Tibial artery (tissue), 4 donors: ENCODE measurements at regions of chr21 and their contacts with region 1.

Region 1: DNA sequence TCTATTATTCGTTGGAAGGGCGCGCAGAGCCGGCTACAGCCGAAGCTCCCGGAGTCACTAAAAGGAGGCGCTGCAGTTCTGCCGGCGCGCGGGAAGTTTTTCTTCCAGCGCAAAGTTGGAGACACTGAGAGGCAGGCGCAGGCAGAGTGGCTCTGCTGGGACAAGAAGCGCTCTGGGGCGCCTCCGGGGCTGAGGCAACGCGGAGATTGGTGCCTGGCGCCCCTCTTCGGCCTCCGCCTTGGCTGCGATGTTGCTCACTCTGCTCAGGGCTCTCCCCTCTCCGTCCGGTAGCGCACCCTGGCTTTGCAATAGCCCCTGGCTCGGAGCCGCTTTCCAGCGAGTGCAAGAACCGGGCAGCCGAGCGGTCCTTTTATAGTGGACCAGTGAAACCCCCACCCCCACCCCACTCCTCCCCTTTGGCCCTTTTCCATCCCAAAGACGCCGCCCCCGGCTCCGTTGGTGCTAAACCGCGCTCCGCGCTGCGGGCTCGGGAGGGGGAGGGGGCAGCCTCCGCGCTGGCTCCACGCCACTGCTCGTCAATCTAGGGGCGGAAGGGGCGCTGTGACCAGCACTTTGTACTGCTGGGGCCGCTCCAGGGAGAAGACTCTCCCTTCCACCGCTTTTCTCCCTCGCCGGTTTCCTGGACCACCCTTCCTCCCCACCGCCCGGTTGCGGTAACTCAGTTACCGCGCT is at the start of gene ADAMTS1:
- DNase-seq: peak; percentile 93 to 97
- H3K4me3 ChIP-seq: peak within 1 kb of the TSS; percentile 79 to 82
- H3K27ac ChIP-seq: peak within 1 kb of the TSS; percentile 89 to 95
- H3K4me1 ChIP-seq: peaks cover 0 to 34% (median 7%) of the 10 kb centered on the region in 4 donors
- H3K27me3 ChIP-seq: no peaks in the 10 kb centered on the region
- CTCF ChIP-seq: no peak

Region 2: GRCh38 chr21:25682382-25682781 is 1162.8 kb before region 1 on chr21:
- intact Hi-C with region 1: no loop called
- DNase-seq: no peak
- H3K4me3 ChIP-seq: no peak overlapping the region
- H3K27ac ChIP-seq: no peak overlapping the region
- H3K4me1 ChIP-seq: peaks cover 0 to 5% (median 0%) of the 10 kb centered on the region in 4 donors
- H3K27me3 ChIP-seq: no peaks in the 10 kb centered on the region
- CTCF ChIP-seq: no peak

Region 3: DNA sequence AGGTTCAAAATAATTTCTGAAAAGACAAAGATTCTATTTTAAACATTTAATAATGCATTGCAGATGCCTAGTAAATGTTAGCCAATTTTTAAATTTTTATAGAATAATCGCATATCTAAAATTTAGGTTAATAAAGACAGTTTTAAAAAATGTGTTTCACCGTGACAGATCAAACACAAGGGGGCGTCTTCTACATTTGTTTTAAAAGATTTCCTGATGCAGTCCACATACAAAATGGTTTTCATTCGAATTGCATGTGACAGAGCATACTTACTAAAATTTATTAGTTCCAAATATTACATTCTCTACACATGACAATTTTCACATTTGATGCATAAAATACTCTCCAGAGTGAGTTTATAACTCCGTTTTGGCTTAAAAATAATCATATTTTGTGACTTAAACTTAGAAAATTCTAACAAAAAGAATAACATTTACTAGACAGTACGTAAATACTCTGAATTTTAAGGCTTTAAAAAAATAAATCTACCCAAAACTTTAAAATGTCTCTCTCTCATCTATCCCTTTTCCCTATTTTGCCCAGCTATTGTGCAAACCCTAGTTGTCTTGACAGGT is 75.5 kb before region 1 on chr21:
- intact Hi-C with region 1: loop called (anchors 5 kb)
- DNase-seq: no peak
- H3K4me3 ChIP-seq: no peak overlapping the region
- H3K27ac ChIP-seq: no peak overlapping the region
- H3K4me1 ChIP-seq: no peaks in the 10 kb centered on the region
- H3K27me3 ChIP-seq: no peaks in the 10 kb centered on the region
- CTCF ChIP-seq: peak; percentile 56 to 70

Region 4: GRCh38 chr21:27476696-27477095 is 631.5 kb after region 1 on chr21:
- intact Hi-C with region 1: loop called (anchors 10 kb)
- DNase-seq: no peak
- H3K4me3 ChIP-seq: no peak overlapping the region
- H3K27ac ChIP-seq: no peak overlapping the region
- H3K4me1 ChIP-seq: peaks cover 0 to 4% (median 0%) of the 10 kb centered on the region in 4 donors
- H3K27me3 ChIP-seq: no peaks in the 10 kb centered on the region
- CTCF ChIP-seq: peak; percentile 69 to 82

Region 5: GRCh38 chr21:27564684-27565301 is 719.6 kb after region 1 on chr21:
- intact Hi-C with region 1: loop called (anchors 10 kb)
- DNase-seq: peak in 1 of 2 donors; percentile 30
- H3K4me3 ChIP-seq: no peak overlapping the region
- H3K27ac ChIP-seq: no peak overlapping the region
- H3K4me1 ChIP-seq: peaks cover 0 to 21% (median 5%) of the 10 kb centered on the region in 4 donors
- H3K27me3 ChIP-seq: no peaks in the 10 kb centered on the region
- CTCF ChIP-seq: peak; percentile 54 to 55

Region 6: GRCh38 chr21:27700974-27701614 is 855.9 kb after region 1 on chr21:
- intact Hi-C with region 1: loop called (anchors 2 kb)
- DNase-seq: peak; percentile 80 to 88
- H3K4me3 ChIP-seq: no peak overlapping the region
- H3K27ac ChIP-seq: no peak overlapping the region
- H3K4me1 ChIP-seq: no peaks in the 10 kb centered on the region
- H3K27me3 ChIP-seq: no peaks in the 10 kb centered on the region
- CTCF ChIP-seq: peak; percentile 82 to 92

Region 7: GRCh38 chr21:28745131-28746016 is 1900.2 kb after region 1 on chr21:
- intact Hi-C with region 1: loop called (anchors 5 kb)
- DNase-seq: peak; percentile 71 to 77
- H3K4me3 ChIP-seq: peak overlapping the region; percentile 46 to 57
- H3K27ac ChIP-seq: peak overlapping the region; percentile 68 to 74
- H3K4me1 ChIP-seq: peaks cover 0 to 17% (median 4%) of the 10 kb centered on the region in 4 donors
- H3K27me3 ChIP-seq: no peaks in the 10 kb centered on the region
- CTCF ChIP-seq: peak; percentile 92 to 99